H1 (cell line): ENCODE measurements at regions of chr6 and their contacts with region 1.

Region 1: GRCh38 chr6:80331974-80332373 is 225.5 kb downstream of the BCKDHB start:
- DNase-seq: no peak
- H3K4me3 ChIP-seq: peak overlapping the region in 1 of 4 experiments; percentile 46; a peak in 1 of 8 replicates
- H3K27ac ChIP-seq: no peak overlapping the region
- H3K4me1 ChIP-seq: peaks cover 7 to 46% (median 18%) of the 10 kb centered on the region in 4 experiments
- H3K27me3 ChIP-seq: no peaks in the 10 kb centered on the region
- CTCF ChIP-seq: no peak
- EP300 ChIP-seq: no peak
- POLR2A ChIP-seq: no peak
- RAD21 ChIP-seq: no peak

Region 2: GRCh38 chr6:80214436-80215022 is 117.4 kb before region 1 on chr6:
- CTCF ChIA-PET with region 1: interaction called, 22 read pairs
- POLR2A ChIA-PET with region 1: no interaction called
- DNase-seq: no peak
- H3K4me3 ChIP-seq: no peak overlapping the region
- H3K27ac ChIP-seq: no peak overlapping the region
- H3K4me1 ChIP-seq: peaks cover 0 to 3% (median 0%) of the 10 kb centered on the region in 4 experiments; a peak in 3 of 7 replicates
- H3K27me3 ChIP-seq: no peaks in the 10 kb centered on the region
- CTCF ChIP-seq: peak in 2 of 3 experiments; percentile 68 to 75; a peak in 3 of 4 replicates
- EP300 ChIP-seq: no peak
- POLR2A ChIP-seq: no peak
- RAD21 ChIP-seq: peak; percentile 82 to 84

Region 3: GRCh38 chr6:80566361-80566760 is 234.4 kb after region 1 on chr6:
- CTCF ChIA-PET with region 1: no interaction called
- POLR2A ChIA-PET with region 1: no interaction called
- DNase-seq: no peak
- H3K4me3 ChIP-seq: no peak overlapping the region
- H3K27ac ChIP-seq: no peak overlapping the region
- H3K4me1 ChIP-seq: no peaks in the 10 kb centered on the region
- H3K27me3 ChIP-seq: no peaks in the 10 kb centered on the region
- CTCF ChIP-seq: no peak
- EP300 ChIP-seq: no peak
- POLR2A ChIP-seq: no peak
- RAD21 ChIP-seq: no peak